Activated B cell treated with CpG ODN at 0.5 μM for 24 hours (primary cell): ENCODE measurements at regions of chr15 and their contacts with region 1.

Region 1: GRCh38 chr15:63514531-63514943 is 10.1 kb downstream of the USP3 start:
- DNase-seq: no peak
- ATAC-seq: no peak
- H3K4me3 Mint-ChIP-seq: no peak overlapping the region
- H3K27ac Mint-ChIP-seq: peak overlapping the region; percentile 66
- H3K4me1 Mint-ChIP-seq: peaks cover 92% of the 10 kb centered on the region
- H3K27me3 Mint-ChIP-seq: no peaks in the 10 kb centered on the region
- CTCF ChIP-seq: no peak

Region 2: GRCh38 chr15:63332367-63333124 is 182.0 kb before region 1 on chr15:
- CTCF ChIA-PET with region 1: no interaction called
- POLR2A ChIA-PET with region 1: no interaction called
- intact Hi-C with region 1: no loop called
- DNase-seq: no peak
- ATAC-seq: no peak
- H3K4me3 Mint-ChIP-seq: no peak overlapping the region
- H3K27ac Mint-ChIP-seq: no peak overlapping the region
- H3K4me1 Mint-ChIP-seq: no peaks in the 10 kb centered on the region
- H3K27me3 Mint-ChIP-seq: no peaks in the 10 kb centered on the region
- CTCF ChIP-seq: no peak

Region 3: GRCh38 chr15:63531586-63531985 is 17.0 kb after region 1 on chr15:
- CTCF ChIA-PET with region 1: interaction called, 6 read pairs
- POLR2A ChIA-PET with region 1: interaction called, 5 read pairs
- intact Hi-C with region 1: loop called (anchors 2 kb)
- DNase-seq: no peak
- ATAC-seq: peak; percentile 51
- H3K4me3 Mint-ChIP-seq: peak overlapping the region; percentile 12
- H3K27ac Mint-ChIP-seq: peak overlapping the region; percentile 39
- H3K4me1 Mint-ChIP-seq: peaks cover 97% of the 10 kb centered on the region
- H3K27me3 Mint-ChIP-seq: no peaks in the 10 kb centered on the region
- CTCF ChIP-seq: no peak

Region 4: DNA sequence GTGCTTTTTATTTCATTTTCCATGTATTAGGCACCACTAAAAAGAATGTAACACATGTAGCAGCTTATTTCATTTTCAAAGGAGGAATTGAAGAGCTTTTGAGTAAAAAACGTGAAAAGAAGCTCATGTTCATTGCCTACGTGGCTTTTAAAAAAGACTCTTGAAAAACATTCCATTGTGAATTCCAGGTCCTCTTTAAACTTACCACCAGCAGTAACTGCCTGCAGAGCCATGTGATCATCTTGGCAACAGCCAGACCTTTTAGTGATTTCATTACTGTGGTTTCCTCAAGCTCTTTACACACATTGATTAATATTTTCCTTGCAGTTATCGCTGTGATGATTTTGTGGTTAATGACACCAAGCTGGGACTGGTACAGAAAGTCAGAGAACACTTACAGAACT is 38.9 kb after region 1 on chr15:
- CTCF ChIA-PET with region 1: no interaction called
- POLR2A ChIA-PET with region 1: interaction called, 6 read pairs
- intact Hi-C with region 1: loop called (anchors 5 kb)
- DNase-seq: no peak
- ATAC-seq: no peak
- H3K4me3 Mint-ChIP-seq: no peak overlapping the region
- H3K27ac Mint-ChIP-seq: peak overlapping the region; percentile 44
- H3K4me1 Mint-ChIP-seq: peaks cover 28% of the 10 kb centered on the region
- H3K27me3 Mint-ChIP-seq: no peaks in the 10 kb centered on the region
- CTCF ChIP-seq: no peak